ENCODE measurements at regions of chr11 and their contacts with region 1.

Region 1: GRCh38 chr11:86608251-86608799 is 64.1 kb downstream of the ME3 start:
- DNase-seq: peak; percentile 65
- ATAC-seq: peak; percentile 74

Region 2: GRCh38 chr11:86047275-86047991 is 560.9 kb before region 1 on chr11:
- intact Hi-C with region 1: no loop called
- DNase-seq: no peak
- ATAC-seq: no peak

Region 3: DNA sequence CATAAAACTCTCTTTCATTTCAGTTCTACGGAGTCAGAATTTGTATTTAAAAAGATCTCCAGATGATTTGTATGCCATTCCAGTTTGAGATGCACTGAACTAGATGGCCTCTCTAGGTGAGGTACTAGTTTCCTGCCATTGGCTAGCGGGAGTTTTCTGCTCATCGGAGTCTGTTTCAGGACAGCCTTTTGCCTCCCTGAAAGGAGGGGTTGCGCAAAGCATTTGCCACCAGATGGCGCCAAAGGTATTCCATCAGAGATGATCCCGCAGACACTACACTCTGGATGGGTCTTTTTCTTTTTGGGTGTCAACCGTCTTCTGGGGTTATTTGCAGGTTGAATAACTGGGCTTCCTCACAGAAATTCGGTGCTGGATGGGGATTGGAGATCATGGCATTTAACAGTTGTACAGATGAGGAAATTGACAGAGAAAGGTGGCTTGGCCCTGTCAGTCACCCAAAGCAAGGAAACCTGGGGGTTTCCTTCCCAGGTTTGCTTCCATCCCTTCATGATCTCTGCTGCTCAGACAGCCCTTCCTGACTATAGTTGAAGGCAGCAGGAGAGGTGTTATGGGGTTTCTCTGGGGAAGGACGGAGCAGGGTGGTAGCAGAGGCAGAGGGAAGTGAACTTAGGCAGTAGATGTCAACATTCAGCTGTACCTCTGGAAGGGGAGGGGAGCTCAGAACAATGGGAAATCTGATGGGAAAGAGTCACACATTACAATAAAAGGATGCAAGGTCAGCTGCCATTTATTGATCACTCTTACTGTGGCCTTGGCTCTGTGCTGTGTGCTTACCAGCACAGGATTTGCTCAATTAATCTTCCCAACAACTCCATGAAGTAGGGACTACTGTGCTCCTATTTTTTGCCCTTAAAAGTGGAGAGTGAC is 152.0 kb before region 1 on chr11:
- intact Hi-C with region 1: loop called (anchors 2 kb)
- DNase-seq: peak; percentile 78
- ATAC-seq: peak; percentile 82

Region 4: GRCh38 chr11:86548271-86548917 is 59.9 kb before region 1 on chr11:
- intact Hi-C with region 1: loop called (anchors 5 kb)
- DNase-seq: no peak
- ATAC-seq: peak; percentile 49

Region 5: GRCh38 chr11:86571273-86571948 is 36.9 kb before region 1 on chr11:
- intact Hi-C with region 1: no loop called
- DNase-seq: no peak
- ATAC-seq: no peak

Region 6: GRCh38 chr11:86802601-86803051 is 194.3 kb after region 1 on chr11:
- intact Hi-C with region 1: loop called (anchors 5 kb)
- DNase-seq: no peak
- ATAC-seq: no peak

Region 7: DNA sequence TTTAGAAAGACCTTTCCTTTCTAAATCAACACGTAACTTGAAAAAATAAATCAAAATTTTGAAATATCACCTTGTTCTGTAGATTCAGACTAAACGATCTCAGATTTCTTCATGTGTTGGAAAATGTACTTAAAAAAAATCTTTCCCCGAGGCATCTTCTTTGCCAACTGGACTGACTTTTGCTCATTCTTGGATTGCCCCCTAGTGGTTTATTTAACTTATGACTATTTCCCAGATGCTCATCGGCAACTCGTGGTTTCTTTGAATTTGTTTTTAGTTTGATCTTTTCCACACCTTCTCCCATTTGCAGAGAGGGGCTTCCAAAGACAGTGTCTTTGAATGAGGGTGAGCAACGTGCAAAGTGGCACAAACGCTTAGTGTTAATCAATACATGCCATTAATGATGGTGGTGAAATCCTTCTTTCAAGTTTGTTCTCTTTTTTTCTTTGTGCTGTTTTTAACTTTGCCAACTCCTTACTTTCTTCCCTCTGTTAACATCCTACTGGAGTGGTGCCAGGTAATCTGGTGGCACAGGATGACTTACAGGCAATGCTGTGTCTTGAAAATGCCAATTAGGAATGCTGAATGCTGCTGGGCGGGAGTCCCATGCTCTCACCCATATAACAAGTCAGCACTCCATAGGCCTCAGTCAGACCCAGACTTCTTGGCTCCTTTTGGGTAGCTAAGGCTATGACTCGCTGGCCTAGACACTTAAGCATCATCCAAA is 210.3 kb after region 1 on chr11:
- intact Hi-C with region 1: loop called (anchors 1 kb)
- DNase-seq: no peak
- ATAC-seq: no peak

Region 8: DNA sequence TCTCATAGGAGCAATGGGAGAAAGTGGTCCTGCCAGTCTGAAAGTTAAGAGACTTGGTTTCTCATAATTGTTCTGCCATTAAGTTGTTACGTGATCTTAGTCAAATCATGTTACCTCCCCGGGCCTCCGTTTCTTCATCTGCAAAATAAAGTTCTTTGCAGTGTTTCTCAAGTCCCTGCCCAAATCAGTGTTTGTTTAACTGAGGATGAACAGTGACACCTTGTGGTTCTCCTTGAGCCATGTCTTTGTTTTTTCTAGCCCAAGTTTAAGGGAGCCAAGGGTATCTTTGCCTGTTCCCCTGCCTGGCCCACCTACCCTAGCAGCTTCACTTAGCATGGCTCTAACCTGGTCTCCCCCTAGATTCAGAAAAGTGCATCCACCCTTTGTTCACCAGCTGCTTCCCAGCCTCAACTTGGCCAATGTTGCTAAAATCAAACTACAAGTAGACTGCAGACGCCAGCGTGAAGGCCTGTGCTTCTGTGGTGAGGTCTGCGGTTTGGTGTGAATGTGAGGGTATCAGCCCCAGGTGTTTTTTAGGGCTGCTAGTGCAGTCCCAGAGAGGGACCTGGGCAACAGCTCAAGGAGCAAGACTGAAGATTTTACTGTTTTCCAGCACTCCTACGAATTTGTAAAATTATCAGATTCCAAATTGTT is 311.4 kb after region 1 on chr11:
- intact Hi-C with region 1: loop called (anchors 10 kb)
- DNase-seq: no peak
- ATAC-seq: peak; percentile 50